CD8-positive, alpha-beta T cell (primary cell): ENCODE measurements at regions of chr5 and their contacts with region 1.

Region 1: GRCh38 chr5:180831139-180832048 is 28.8 kb upstream of the MGAT1 start:
- DNase-seq: peak; percentile 51 to 88 (median 79)
- ATAC-seq: peak; percentile 43
- H3K4me3 ChIP-seq: peak overlapping the region; percentile 67 to 93
- H3K4me3 Mint-ChIP-seq: peak overlapping the region; percentile 97
- H3K27ac ChIP-seq: peak overlapping the region; percentile 85 to 96
- H3K27ac Mint-ChIP-seq: peak overlapping the region; percentile 98
- H3K4me1 ChIP-seq: peaks cover 48% of the 10 kb centered on the region
- H3K4me1 Mint-ChIP-seq: peaks cover 51% of the 10 kb centered on the region
- H3K27me3 ChIP-seq: no peaks in the 10 kb centered on the region
- H3K27me3 Mint-ChIP-seq: no peaks in the 10 kb centered on the region
- CTCF ChIP-seq: no peak

Region 2: DNA sequence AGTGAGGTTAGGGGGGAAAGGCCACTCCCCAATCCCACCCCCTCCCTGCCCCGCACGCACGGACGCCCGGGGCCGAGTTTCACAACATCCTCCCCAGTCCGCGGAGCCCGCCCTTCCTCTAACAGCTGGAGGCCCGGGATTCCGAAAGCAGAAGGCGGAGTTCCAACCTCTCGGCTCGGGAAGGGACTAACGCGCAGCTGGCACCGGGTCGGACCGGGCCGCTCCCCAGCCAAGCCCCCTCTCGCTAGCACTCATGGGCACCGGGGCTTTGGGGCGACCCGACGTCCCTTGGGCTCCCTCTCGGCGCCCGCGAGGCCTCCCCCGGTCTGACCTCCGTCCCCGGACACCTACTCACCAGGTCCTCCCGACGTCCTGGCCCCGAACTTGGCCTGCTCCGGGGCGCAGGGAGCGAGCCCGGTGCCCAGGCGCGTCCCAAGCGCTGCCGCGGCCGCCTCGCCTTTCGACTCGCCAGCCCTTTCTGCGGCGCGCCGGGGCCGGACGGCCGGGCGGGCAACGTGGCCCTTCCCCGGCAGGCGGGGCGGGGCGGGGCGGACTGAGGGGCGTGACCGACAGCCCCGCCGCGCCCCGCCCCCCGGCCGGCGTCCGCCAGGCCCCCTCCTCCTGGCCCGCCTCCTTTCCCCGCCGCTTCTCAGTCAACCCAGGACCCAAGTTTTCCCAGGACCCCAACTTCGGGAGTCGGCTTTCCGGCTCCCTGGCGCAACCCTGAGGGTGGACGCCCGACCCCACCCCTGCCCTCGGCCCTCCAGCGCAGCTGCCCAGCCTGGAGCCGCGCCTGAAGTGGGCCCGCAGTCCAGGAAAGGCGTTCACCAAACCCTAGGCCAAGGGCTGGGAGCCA is 28.8 kb before region 1 on chr5 and contains the start of gene MGAT1:
- CTCF ChIA-PET with region 1: interaction called, 24 read pairs
- POLR2A ChIA-PET with region 1: interaction called, 134 read pairs
- intact Hi-C with region 1: loop called (anchors 1 kb)
- DNase-seq: peak; percentile 39 to 87 (median 80)
- ATAC-seq: peak; percentile 60
- H3K4me3 ChIP-seq: peak within 1 kb of the TSS; percentile 90 to 92
- H3K4me3 Mint-ChIP-seq: peak within 1 kb of the TSS; percentile 87
- H3K27ac ChIP-seq: peak within 1 kb of the TSS; percentile 63 to 87
- H3K27ac Mint-ChIP-seq: peak within 1 kb of the TSS; percentile 100
- H3K4me1 ChIP-seq: peaks cover 80% of the 10 kb centered on the region
- H3K4me1 Mint-ChIP-seq: peaks cover 84% of the 10 kb centered on the region
- H3K27me3 ChIP-seq: no peaks in the 10 kb centered on the region
- H3K27me3 Mint-ChIP-seq: no peaks in the 10 kb centered on the region
- CTCF ChIP-seq: no peak
- total RNA-seq, gene MGAT1: 43.5 to 47.5 TPM

Region 3: GRCh38 chr5:180810210-180810958 is 21.0 kb before region 1 on chr5:
- CTCF ChIA-PET with region 1: interaction called, 35 read pairs
- POLR2A ChIA-PET with region 1: interaction called, 134 read pairs
- intact Hi-C with region 1: loop called (anchors 1 kb)
- DNase-seq: peak; percentile 91 to 99 (median 97)
- ATAC-seq: peak; percentile 79
- H3K4me3 ChIP-seq: peak overlapping the region; percentile 66 to 96
- H3K4me3 Mint-ChIP-seq: peak overlapping the region; percentile 84
- H3K27ac ChIP-seq: peak overlapping the region; percentile 94 to 98
- H3K27ac Mint-ChIP-seq: peak overlapping the region; percentile 100
- H3K4me1 ChIP-seq: peaks cover 50% of the 10 kb centered on the region
- H3K4me1 Mint-ChIP-seq: peaks cover 72% of the 10 kb centered on the region
- H3K27me3 ChIP-seq: no peaks in the 10 kb centered on the region
- H3K27me3 Mint-ChIP-seq: no peaks in the 10 kb centered on the region
- CTCF ChIP-seq: no peak

Region 4: GRCh38 chr5:180816608-180817534 is 14.5 kb before region 1 on chr5:
- CTCF ChIA-PET with region 1: interaction called, 35 read pairs
- POLR2A ChIA-PET with region 1: interaction called, 134 read pairs
- intact Hi-C with region 1: no loop called
- DNase-seq: peak in 2 of 9 experiments; percentile 51 to 55
- ATAC-seq: peak; percentile 54
- H3K4me3 ChIP-seq: peak overlapping the region in 1 of 2 experiments; percentile 14
- H3K4me3 Mint-ChIP-seq: peak overlapping the region; percentile 65
- H3K27ac ChIP-seq: no peak overlapping the region
- H3K27ac Mint-ChIP-seq: peak overlapping the region; percentile 81
- H3K4me1 ChIP-seq: peaks cover 20% of the 10 kb centered on the region
- H3K4me1 Mint-ChIP-seq: peaks cover 38% of the 10 kb centered on the region
- H3K27me3 ChIP-seq: no peaks in the 10 kb centered on the region
- H3K27me3 Mint-ChIP-seq: no peaks in the 10 kb centered on the region
- CTCF ChIP-seq: no peak

Region 5: GRCh38 chr5:180848878-180849277 is 17.5 kb after region 1 on chr5:
- CTCF ChIA-PET with region 1: interaction called, 3 read pairs
- POLR2A ChIA-PET with region 1: interaction called, 12 read pairs
- intact Hi-C with region 1: no loop called
- DNase-seq: no peak
- ATAC-seq: no peak
- H3K4me3 ChIP-seq: no peak overlapping the region
- H3K4me3 Mint-ChIP-seq: no peak overlapping the region
- H3K27ac ChIP-seq: no peak overlapping the region
- H3K27ac Mint-ChIP-seq: no peak overlapping the region
- H3K4me1 ChIP-seq: no peaks in the 10 kb centered on the region
- H3K4me1 Mint-ChIP-seq: peaks cover 8% of the 10 kb centered on the region
- H3K27me3 ChIP-seq: no peaks in the 10 kb centered on the region
- H3K27me3 Mint-ChIP-seq: no peaks in the 10 kb centered on the region
- CTCF ChIP-seq: no peak

Region 6: DNA sequence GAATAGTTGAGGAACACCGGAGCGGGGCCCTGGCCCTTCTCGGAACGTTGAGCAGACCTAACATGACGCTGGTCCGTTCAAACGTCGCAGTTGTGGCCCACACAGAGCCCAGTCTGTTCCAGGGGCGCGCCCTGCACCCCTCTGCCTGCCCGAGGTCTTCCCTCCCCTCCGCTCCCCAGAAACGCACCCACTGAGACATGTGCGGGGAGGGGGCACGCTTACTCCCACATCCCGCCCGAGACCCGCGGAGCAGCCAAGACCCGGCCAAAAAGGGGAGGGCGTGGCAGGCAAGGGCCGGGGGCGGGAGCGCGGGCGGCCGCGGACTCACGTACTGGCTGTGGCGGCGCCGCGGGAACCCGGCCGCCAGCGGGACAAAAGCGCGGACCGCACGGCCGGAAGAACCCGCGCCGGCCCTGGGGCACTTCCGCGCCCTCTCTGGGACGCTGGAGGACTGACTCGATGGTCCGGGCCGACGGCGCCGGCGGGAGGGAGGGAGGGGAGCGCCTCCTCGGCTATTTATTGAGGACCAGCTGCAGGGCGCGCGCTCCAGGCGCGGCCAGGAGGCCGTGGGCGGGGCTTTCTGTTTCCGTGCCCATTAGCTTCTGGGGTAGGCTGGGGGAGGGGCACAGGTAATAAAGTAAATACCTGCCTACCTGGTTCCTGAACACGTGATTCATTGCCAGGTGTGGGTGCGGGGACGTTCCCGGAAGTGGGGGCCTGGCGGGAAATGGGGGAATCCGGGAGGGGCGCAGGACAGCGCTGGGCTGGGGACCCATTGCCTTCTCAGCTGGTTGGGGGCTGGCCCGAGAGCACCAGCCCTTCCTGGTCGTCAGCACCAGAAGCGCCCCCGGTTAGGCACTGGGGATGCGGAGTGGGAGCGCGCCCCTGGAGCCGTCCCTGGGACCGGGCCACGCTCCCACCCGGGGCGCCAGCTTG is 29.8 kb after region 1 on chr5 and contains the start of gene ZFP62:
- CTCF ChIA-PET with region 1: interaction called, 4 read pairs
- POLR2A ChIA-PET with region 1: interaction called, 28 read pairs
- intact Hi-C with region 1: loop called (anchors 1 kb)
- DNase-seq: peak; percentile 81 to 94 (median 86)
- ATAC-seq: peak; percentile 71
- H3K4me3 ChIP-seq: peak within 1 kb of the TSS; percentile 79 to 86
- H3K4me3 Mint-ChIP-seq: peak within 1 kb of the TSS; percentile 94
- H3K27ac ChIP-seq: peak within 1 kb of the TSS; percentile 65 to 85
- H3K27ac Mint-ChIP-seq: peak within 1 kb of the TSS; percentile 96
- H3K4me1 ChIP-seq: no peaks in the 10 kb centered on the region
- H3K4me1 Mint-ChIP-seq: peaks cover 29% of the 10 kb centered on the region
- H3K27me3 ChIP-seq: no peaks in the 10 kb centered on the region
- H3K27me3 Mint-ChIP-seq: no peaks in the 10 kb centered on the region
- CTCF ChIP-seq: peak; percentile 8
- total RNA-seq, gene ZFP62: 13.7 to 13.9 TPM

Region 7: GRCh38 chr5:181191529-181192394 is 360.4 kb after region 1 on chr5:
- CTCF ChIA-PET with region 1: no interaction called
- POLR2A ChIA-PET with region 1: interaction called, 11 read pairs
- intact Hi-C with region 1: no loop called
- DNase-seq: peak; percentile 90 to 99 (median 96)
- ATAC-seq: peak; percentile 50
- H3K4me3 ChIP-seq: peak overlapping the region; percentile 88 to 90
- H3K4me3 Mint-ChIP-seq: peak overlapping the region; percentile 98
- H3K27ac ChIP-seq: peak overlapping the region; percentile 74 to 78
- H3K27ac Mint-ChIP-seq: peak overlapping the region; percentile 95
- H3K4me1 ChIP-seq: peaks cover 7% of the 10 kb centered on the region
- H3K4me1 Mint-ChIP-seq: peaks cover 23% of the 10 kb centered on the region
- H3K27me3 ChIP-seq: no peaks in the 10 kb centered on the region
- H3K27me3 Mint-ChIP-seq: no peaks in the 10 kb centered on the region
- CTCF ChIP-seq: no peak